ENCODE measurements at regions of chr4 and their contacts with region 1.

Region 1: GRCh38 chr4:156195914-156196313 is 242.2 kb upstream of the CTSO start:
- DNase-seq: no peak
- H3K4me3 ChIP-seq: no peak overlapping the region
- H3K27ac ChIP-seq: no peak overlapping the region
- H3K4me1 ChIP-seq: peaks cover 0 to 3% (median 0%) of the 10 kb centered on the region in 4 donors
- H3K27me3 ChIP-seq: no peaks in the 10 kb centered on the region
- CTCF ChIP-seq: no peak
- EP300 ChIP-seq: no peak
- POLR2A ChIP-seq: no peak

Region 2: GRCh38 chr4:155802190-155802959 is 393.5 kb before region 1 on chr4:
- in situ Hi-C with region 1: no loop called
- intact Hi-C with region 1: loop called (anchors 5 kb)
- DNase-seq: no peak
- H3K4me3 ChIP-seq: no peak overlapping the region
- H3K27ac ChIP-seq: peak overlapping the region; percentile 62 to 76 (median 70)
- H3K4me1 ChIP-seq: peaks cover 3 to 18% (median 8%) of the 10 kb centered on the region in 4 donors
- H3K27me3 ChIP-seq: no peaks in the 10 kb centered on the region
- CTCF ChIP-seq: no peak
- EP300 ChIP-seq: no peak
- POLR2A ChIP-seq: no peak

Region 3: GRCh38 chr4:156182269-156182668 is 13.6 kb before region 1 on chr4:
- in situ Hi-C with region 1: no loop called
- intact Hi-C with region 1: no loop called
- DNase-seq: no peak
- H3K4me3 ChIP-seq: no peak overlapping the region
- H3K27ac ChIP-seq: no peak overlapping the region
- H3K4me1 ChIP-seq: no peaks in the 10 kb centered on the region
- H3K27me3 ChIP-seq: no peaks in the 10 kb centered on the region
- CTCF ChIP-seq: no peak
- EP300 ChIP-seq: no peak
- POLR2A ChIP-seq: no peak

Measured in transverse colon (tissue), 4 donors.